Heart right ventricle (tissue), 16 donors: ENCODE measurements at regions of chr14 and their contacts with region 1.

Region 1: DNA sequence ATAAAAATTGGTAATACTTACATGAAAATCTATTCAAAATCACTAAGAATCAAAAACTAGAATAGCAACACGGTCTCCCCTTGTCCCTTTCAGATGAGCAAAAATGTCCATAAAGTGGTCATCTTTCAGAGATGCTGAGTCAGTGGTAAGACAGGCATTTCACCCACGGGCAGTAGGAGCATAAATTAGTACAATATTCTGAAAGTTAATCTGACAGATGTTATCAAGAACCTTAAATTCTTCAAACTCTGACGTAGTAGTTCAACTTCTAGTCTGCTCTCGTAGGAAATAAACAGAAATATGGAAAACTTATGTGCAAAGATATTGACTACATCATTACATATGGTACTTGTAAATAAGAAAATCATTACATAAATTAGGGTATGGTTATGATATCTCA is 33.1 kb upstream of the GNPNAT1 start:
- DNase-seq: no peak
- ATAC-seq: no peak
- H3K4me3 ChIP-seq: no peak overlapping the region
- H3K27ac ChIP-seq: no peak overlapping the region
- H3K4me1 ChIP-seq: peaks cover 0 to 9% (median 0%) of the 10 kb centered on the region in 9 donors
- H3K27me3 ChIP-seq: no peaks in the 10 kb centered on the region
- CTCF ChIP-seq: no peak

Region 2: DNA sequence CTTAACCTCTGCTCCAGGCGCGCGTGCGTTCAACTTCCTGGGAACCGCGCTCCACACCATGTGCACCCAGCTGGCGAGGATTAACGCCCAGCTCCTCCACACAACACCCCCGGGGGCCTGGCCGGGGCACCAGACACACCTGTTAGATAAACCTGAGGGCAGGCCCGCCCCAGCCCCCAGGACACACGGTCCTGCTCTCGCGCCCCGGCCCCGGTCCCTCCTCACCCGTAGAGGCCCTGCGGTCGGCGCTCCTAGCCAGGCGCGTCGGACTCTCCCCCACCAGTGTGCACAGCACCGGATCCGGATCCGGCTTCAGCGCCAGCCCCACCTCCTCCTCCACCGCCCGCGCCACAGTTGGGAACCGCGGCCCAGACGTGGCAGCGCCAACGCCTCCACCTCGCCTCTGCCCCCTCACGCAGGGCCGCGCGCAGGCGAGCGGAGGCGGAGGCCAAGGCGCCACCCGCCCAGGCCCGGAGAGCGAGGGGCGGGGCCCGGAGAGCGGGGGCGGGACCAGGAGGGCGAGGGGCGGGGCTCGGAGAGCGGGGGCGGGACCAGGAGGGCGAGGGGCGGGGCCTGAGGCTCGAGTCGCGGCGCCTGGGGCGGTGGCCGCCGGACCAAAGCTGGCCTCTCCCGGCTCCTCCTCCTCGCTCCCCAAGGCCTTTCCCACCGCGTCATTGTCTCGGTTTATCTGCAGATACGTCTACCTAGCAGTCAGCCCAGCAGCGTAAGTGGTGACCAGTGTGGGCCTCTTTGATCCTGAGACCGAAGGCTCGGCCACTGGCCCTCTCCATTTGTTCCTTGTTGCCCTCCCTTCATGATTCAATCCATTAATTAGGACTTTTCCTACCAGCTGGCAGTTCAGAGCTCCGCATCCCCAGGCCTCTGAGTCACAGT is 33.1 kb before region 1 on chr14 and contains the start of gene GNPNAT1:
- intact Hi-C with region 1: no loop called
- DNase-seq: peak; percentile 83 to 87
- ATAC-seq: peak; percentile 93 to 99 (median 95)
- H3K4me3 ChIP-seq: peak within 1 kb of the TSS; percentile 51 to 93 (median 74)
- H3K27ac ChIP-seq: peak within 1 kb of the TSS; percentile 67 to 94 (median 88)
- H3K4me1 ChIP-seq: peaks cover 0 to 30% (median 20%) of the 10 kb centered on the region in 9 donors
- H3K27me3 ChIP-seq: no peaks in the 10 kb centered on the region
- CTCF ChIP-seq: peak in 1 of 9 donors; percentile 5
- total RNA-seq, gene GNPNAT1: 4.5 to 12.7 (median 5.3) TPM

Region 3: GRCh38 chr14:53306267-53306721 is 481.8 kb after region 1 on chr14:
- intact Hi-C with region 1: loop called in 7 of 10 experiments (anchors 1 to 10 kb)
- DNase-seq: peak; percentile 44 to 67
- ATAC-seq: peak in 7 of 8 donors; percentile 70 to 87 (median 85)
- H3K4me3 ChIP-seq: peak overlapping the region in 9 of 10 donors; percentile 25 to 56 (median 42)
- H3K27ac ChIP-seq: peak overlapping the region in 8 of 10 donors; percentile 35 to 64 (median 40)
- H3K4me1 ChIP-seq: peaks cover 0 to 25% (median 5%) of the 10 kb centered on the region in 9 donors
- H3K27me3 ChIP-seq: no peaks in the 10 kb centered on the region
- CTCF ChIP-seq: peak; percentile 51 to 90 (median 82)